ENCODE measurements at regions of chr16 and their contacts with region 1.

Region 1: DNA sequence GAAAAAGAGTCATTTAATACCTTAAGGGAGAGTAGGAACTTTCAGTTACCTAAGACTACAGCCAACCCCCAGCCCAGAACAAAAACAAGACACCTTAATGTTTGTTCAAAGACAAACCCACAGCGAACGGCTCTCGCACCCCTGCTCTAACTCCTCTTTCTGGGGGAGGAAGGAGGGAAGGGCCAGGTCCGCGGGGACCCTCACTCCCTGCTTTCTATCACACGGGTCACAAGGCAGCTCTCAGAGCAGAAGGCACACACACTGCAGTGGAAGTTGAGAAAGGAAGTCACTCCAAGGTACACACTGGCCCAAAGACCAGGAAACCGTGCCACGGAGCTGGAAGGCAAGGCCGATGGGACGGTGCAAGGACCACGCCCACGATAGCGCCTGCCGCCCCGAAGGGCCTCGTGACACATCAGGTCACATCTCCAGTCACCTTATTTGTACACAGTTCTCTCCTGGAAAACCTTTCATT is 10.0 kb downstream of the LITAFD start:
- DNase-seq: peak in 2 of 10 donors; percentile 36 to 67

Region 2: DNA sequence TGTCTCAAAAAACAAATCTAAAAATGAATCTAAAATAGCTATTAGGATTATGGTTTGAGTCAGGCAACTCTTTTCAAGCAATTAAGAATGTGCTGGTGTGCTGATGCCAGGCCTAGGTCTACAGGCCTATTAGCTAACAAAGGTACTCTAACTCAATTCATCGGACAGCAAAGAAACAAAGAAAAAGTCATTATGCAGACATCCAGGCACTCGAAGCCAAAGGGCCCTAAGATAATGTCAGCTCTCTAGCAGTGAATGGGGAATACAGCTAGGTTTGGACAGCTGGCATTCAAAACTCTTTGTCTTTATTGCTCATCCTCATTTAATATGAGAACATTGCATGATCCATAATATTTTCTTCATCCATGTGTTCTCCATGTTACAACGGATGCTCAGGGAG is 410.3 kb before region 1 on chr16:
- intact Hi-C with region 1: no loop called
- DNase-seq: no peak

Region 3: GRCh38 chr16:8572919-8573724 is 319.0 kb before region 1 on chr16:
- intact Hi-C with region 1: loop called (anchors 5 kb)
- DNase-seq: peak in 3 of 10 donors; percentile 35 to 83 (median 81)

Region 4: GRCh38 chr16:8878521-8878911 is 13.6 kb before region 1 on chr16:
- intact Hi-C with region 1: no loop called
- DNase-seq: peak in 4 of 10 donors; percentile 7 to 44 (median 30)

Measured in posterior cingulate gyrus (tissue), 11 donors.